Panc1 (cell line): ENCODE measurements at regions of chr17 and their contacts with region 1.

Region 1: DNA sequence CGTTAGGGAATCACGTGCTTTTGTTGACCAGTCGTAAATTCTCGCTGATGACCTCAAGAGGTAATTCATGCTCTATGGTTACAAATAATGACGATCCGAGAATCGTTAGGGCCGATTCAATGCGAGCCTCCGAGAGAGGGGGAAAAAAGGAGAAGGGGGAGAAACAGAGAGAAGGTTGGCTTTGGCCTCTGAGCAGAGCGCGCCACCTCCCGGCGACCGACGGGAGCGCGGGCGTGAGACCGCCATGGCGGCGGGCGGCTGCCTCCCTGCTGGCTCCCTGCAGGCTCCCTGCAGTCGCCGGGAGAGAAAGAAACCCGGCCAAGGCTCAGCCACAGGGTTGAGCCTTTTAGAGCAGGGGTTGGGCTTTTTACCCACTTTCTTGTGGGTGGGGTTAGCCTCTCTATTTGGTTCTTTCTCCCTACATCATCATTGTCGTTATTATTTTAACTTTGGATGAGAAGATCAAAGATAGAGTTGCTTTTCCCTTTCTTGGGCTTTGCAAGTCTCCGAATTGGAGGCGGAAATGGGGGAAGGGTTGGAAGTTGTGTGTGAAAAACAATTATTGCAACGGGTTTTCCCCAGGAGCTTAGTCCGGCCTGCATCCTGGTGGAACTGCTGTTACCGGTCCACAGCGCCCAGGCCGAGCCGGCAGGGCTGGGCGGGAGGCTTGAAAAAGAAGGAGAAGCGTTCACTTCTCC is 410 bp upstream of the HOXB5 start:
- DNase-seq: no peak
- ATAC-seq: peak; percentile 51
- H3K4me3 ChIP-seq: peak overlapping the region; percentile 70 to 99
- H3K27ac ChIP-seq: peak overlapping the region; percentile 99
- H3K4me1 ChIP-seq: peaks cover 64% of the 10 kb centered on the region
- H3K27me3 ChIP-seq: no peaks in the 10 kb centered on the region
- CTCF ChIP-seq: peak; percentile 100

Region 2: GRCh38 chr17:48223945-48224344 is 370.0 kb before region 1 on chr17:
- CTCF ChIA-PET with region 1: no interaction called
- POLR2A ChIA-PET with region 1: interaction called, 11 read pairs
- in situ Hi-C with region 1: no loop called
- intact Hi-C with region 1: no loop called
- DNase-seq: no peak
- ATAC-seq: no peak
- H3K4me3 ChIP-seq: no peak overlapping the region
- H3K27ac ChIP-seq: no peak overlapping the region
- H3K4me1 ChIP-seq: no peaks in the 10 kb centered on the region
- H3K27me3 ChIP-seq: peaks cover 6% of the 10 kb centered on the region; the same call in 1 of the 2 replicates
- CTCF ChIP-seq: no peak

Region 3: GRCh38 chr17:48307814-48308411 is 286.1 kb before region 1 on chr17:
- CTCF ChIA-PET with region 1: interaction called, 10 read pairs
- POLR2A ChIA-PET with region 1: no interaction called
- in situ Hi-C with region 1: no loop called
- intact Hi-C with region 1: no loop called
- DNase-seq: peak; percentile 36
- ATAC-seq: peak; percentile 98
- H3K4me3 ChIP-seq: no peak overlapping the region
- H3K27ac ChIP-seq: no peak overlapping the region
- H3K4me1 ChIP-seq: no peaks in the 10 kb centered on the region
- H3K27me3 ChIP-seq: no peaks in the 10 kb centered on the region; the same call in 1 of the 2 replicates
- CTCF ChIP-seq: peak; percentile 96

Region 4: GRCh38 chr17:48543107-48543853 is 50.7 kb before region 1 on chr17:
- CTCF ChIA-PET with region 1: no interaction called
- POLR2A ChIA-PET with region 1: interaction called, 11 read pairs
- in situ Hi-C with region 1: no loop called
- intact Hi-C with region 1: no loop called
- DNase-seq: no peak
- ATAC-seq: peak; percentile 59
- H3K4me3 ChIP-seq: peak overlapping the region; percentile 69 to 81
- H3K27ac ChIP-seq: peak overlapping the region; percentile 98
- H3K4me1 ChIP-seq: peaks cover 48% of the 10 kb centered on the region
- H3K27me3 ChIP-seq: no peaks in the 10 kb centered on the region
- CTCF ChIP-seq: no peak

Region 5: GRCh38 chr17:48603959-48604769 is 10.2 kb after region 1 on chr17:
- CTCF ChIA-PET with region 1: interaction called, 4 read pairs
- POLR2A ChIA-PET with region 1: interaction called, 13 read pairs
- in situ Hi-C with region 1: no loop called
- intact Hi-C with region 1: no loop called
- DNase-seq: no peak
- ATAC-seq: peak; percentile 57
- H3K4me3 ChIP-seq: peak overlapping the region; percentile 70 to 99
- H3K27ac ChIP-seq: peak overlapping the region; percentile 99
- H3K4me1 ChIP-seq: peaks cover 57% of the 10 kb centered on the region
- H3K27me3 ChIP-seq: no peaks in the 10 kb centered on the region
- CTCF ChIP-seq: no peak

Region 6: GRCh38 chr17:48610282-48611211 is 16.6 kb after region 1 on chr17 and contains the start of gene HOXB7:
- CTCF ChIA-PET with region 1: interaction called, 6 read pairs
- POLR2A ChIA-PET with region 1: interaction called, 13 read pairs
- in situ Hi-C with region 1: no loop called
- intact Hi-C with region 1: no loop called
- DNase-seq: no peak
- ATAC-seq: peak; percentile 22
- H3K4me3 ChIP-seq: peak within 1 kb of the TSS; percentile 68 to 71
- H3K27ac ChIP-seq: peak within 1 kb of the TSS; percentile 99
- H3K4me1 ChIP-seq: peaks cover 55% of the 10 kb centered on the region
- H3K27me3 ChIP-seq: no peaks in the 10 kb centered on the region
- CTCF ChIP-seq: no peak
- total RNA-seq, gene HOXB7: 44.0 TPM